Posterior cingulate gyrus (tissue), 11 donors: ENCODE measurements at regions of chr6 and their contacts with region 1.

Region 1: GRCh38 chr6:4155848-4156466 is 20.6 kb upstream of the ECI2 start:
- DNase-seq: peak; percentile 33 to 92 (median 74)

Region 2: DNA sequence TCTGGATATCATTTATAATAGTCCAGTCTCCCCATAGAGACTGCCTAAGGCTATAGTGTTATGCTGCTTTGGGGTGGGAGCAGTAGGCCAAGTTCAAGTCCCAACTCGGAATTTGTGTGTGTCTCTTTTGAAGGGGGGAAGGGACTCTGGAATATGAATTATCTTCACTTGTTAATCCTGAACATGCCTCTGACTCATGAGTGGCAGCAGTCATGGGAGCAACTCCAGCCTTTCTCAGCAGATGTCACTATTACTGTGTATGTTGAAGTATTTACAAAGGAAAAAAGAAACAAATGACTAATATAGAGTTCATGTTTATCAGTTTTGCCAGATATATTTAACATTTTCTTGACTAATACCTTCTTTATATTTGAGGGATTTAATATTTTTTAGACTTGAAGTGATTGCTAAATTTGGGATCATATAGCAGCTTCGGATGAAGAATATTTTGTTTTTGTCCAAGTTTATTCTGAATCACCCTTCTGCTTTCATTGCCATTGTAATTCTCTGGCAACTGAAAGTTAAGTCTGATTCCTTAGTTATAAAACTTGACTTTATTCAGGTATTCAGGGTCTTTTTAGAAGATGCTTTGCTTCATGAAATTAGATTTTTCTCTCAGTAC is 100.4 kb before region 1 on chr6:
- intact Hi-C with region 1: loop called (anchors 1 kb)
- DNase-seq: peak in 3 of 10 donors; percentile 17 to 44 (median 30)

Region 3: DNA sequence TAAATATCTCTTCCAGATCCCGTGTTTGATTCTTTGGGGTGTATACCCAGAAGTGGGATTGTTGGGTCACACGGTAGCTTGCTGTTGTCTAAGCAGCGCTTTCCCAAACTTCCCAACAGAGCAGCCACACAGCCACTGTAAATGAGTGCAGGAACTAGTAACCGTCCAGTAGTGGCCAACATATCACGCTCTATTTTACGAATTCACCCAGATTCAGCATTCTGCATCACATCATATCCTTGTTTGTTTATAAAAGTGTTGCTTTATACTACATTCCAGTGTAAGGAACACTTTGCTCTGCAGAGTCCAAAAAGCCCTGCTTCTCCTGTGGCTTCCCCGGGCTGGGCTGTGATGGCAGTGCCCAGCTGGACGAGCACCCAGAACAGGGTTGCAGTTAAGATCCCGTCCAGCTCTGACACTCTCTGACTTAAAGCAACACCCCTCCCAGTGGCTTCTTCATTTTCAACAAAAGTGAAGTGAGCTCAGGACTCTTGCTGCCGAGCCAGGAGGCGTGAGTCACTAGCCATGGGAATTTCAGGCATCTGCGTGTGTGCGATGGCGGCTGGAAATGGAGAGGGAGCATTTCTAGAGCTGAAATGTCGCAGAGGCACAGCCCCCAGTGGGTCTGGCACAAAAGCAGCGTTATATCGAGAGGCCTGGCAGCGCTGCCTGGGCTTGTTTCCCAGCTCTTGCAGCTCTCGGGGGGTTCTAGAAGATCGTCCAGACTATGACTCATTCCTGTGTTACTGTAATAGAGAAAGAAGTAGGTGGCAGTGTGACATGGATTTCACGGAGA is 195.8 kb after region 1 on chr6:
- intact Hi-C with region 1: no loop called
- DNase-seq: peak; percentile 44 to 95 (median 70)